A549 (cell line): ENCODE measurements at regions of chr16 and their contacts with region 1.

Region 1: GRCh38 chr16:15757630-15758251 is 99.1 kb downstream of the MYH11 start:
- DNase-seq: no peak
- ATAC-seq: no peak
- H3K4me3 ChIP-seq: no peak overlapping the region
- H3K27ac ChIP-seq: no peak overlapping the region
- H3K4me1 ChIP-seq: no peaks in the 10 kb centered on the region
- CTCF ChIP-seq: no peak
- EP300 ChIP-seq: no peak
- POLR2A ChIP-seq: no peak
- RAD21 ChIP-seq: no peak

Region 2: DNA sequence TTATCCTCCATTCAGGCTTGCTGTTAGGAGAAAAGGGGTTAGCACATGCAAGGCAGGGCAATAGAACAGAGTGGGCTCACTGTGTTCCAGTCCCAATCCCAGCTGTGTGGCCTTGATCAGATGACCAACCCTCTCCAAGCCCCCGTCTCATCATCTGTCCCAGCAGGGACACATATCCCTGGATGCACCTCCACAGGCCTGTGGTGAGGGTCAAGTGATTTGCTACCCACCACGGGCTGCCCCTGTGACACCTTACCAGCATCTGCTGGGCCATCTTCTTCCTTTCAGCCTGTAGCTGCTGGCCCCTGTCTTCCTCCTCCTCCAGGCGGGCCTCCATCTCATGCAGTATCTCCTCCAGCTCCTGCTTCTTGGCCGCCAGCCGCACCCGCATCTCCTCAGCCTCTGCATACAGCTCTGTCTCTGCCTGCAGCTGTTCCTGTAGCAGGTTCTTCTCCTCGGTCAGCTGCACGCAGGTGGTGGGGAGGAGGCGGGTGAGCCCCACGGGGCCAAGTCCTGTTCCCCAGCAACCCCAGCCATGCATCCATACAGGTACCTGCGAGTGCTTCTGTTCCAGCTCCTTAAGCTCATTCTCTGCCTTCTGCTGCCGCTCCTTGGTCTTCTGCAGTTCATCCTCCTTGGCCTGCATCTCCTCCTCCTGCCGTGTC is 16.4 kb before region 1 on chr16:
- CTCF ChIA-PET with region 1: interaction called, 13 read pairs
- POLR2A ChIA-PET with region 1: interaction called, 10 read pairs
- DNase-seq: no peak
- ATAC-seq: no peak
- H3K4me3 ChIP-seq: no peak overlapping the region
- H3K27ac ChIP-seq: no peak overlapping the region
- H3K4me1 ChIP-seq: no peaks in the 10 kb centered on the region
- CTCF ChIP-seq: no peak
- EP300 ChIP-seq: no peak
- POLR2A ChIP-seq: no peak
- RAD21 ChIP-seq: no peak

Region 3: DNA sequence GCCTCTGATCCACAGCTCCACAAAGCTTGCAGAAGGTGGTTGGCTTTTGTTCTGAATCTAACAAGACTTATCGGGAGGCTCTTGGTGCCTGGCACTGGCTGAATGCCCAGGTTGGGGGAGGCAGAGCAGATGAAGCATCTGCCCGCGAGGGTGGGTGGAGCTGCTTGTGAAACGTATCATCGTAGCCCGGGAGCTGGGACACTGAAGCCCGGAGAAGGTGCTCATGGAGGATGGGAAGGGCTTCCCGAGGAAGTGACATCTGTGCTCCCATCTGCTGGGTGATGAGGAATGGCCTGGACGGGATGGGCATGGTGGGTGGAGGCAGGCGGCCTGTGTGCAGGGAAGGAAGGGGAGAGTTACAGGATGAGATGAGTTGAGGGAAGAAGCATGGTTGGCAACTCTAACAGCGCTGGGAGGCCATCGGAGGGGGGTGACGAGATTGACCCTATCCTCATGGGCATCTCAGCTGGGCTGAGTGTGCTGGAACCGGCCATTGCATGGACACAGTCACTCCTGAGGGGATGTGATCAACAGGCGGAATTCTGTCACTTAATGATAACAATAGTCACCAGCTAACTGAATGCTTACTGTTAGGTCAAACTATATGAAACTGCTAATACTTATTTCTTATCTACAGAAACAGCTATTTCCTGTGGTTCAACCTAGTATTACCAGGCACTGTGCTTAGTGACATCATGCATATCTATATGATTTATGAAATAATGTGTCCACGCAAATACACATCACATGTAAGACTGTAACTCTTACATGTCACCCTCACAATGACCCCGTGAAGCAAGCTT is 362.8 kb after region 1 on chr16:
- CTCF ChIA-PET with region 1: no interaction called
- POLR2A ChIA-PET with region 1: no interaction called
- DNase-seq: no peak
- ATAC-seq: peak in 1 of 2 experiments; percentile 34; a peak in 3 of 6 replicates
- H3K4me3 ChIP-seq: no peak overlapping the region
- H3K27ac ChIP-seq: no peak overlapping the region
- H3K4me1 ChIP-seq: no peaks in the 10 kb centered on the region
- CTCF ChIP-seq: no peak
- EP300 ChIP-seq: no peak
- POLR2A ChIP-seq: no peak
- RAD21 ChIP-seq: no peak